ENCODE measurements at regions of chr2 and their contacts with region 1.

Region 1: DNA sequence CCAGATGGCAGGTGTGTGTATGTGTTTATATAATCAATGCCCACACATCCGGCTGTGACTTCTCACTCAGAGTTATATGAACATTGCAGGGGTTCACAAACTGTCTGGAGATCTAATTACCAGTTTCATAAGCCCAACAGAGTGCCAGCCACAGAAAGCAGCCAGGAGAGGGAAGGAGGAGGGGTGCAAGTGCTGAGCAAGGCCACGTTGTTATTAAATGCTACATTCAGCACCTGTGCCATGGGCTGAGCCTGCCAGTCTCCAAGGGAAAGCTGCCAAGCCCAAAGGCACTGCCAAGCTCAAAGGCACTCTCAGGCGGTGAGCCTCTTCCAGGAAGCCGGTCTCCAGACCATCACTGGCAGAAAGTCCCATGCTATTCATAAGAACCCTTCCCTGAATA is 17.4 kb downstream of the XDH start:
- DNase-seq: peak; percentile 84 to 90
- ATAC-seq: peak; percentile 99
- H3K4me3 ChIP-seq: no peak overlapping the region
- H3K27ac ChIP-seq: peak overlapping the region; percentile 33 to 78 (median 66)
- H3K4me1 ChIP-seq: peaks cover 10 to 15% of the 10 kb centered on the region in 2 donors
- H3K27me3 ChIP-seq: no peaks in the 10 kb centered on the region
- CTCF ChIP-seq: no peak
- POLR2A ChIP-seq: no peak

Region 2: DNA sequence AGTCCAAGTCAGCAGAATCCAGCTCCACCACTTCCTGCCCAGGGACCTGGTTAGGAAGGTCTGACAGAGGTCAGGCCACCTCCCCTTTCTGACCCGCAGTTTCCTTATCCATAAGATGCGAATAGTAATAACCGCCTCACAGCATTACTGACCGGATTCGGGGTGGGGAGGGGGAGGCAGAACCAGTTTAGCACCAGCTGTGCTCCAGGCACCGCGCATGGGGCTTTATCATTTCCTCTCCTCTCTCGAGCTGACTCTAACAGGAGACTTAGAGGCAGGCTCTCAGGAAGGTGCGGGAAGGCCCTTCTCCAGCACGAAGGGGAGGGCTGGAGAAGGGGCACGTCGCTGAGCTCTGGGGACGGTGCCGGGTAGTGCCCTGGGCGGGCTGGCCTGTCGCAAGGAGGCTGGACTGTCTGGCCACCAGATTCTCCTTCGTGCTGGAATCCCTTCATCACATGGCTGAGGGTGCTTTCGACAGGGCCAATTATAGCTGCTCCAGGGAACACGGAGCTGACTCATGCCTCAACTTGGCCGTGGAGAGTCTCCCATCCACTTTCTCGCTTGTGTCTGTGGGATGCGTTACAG is 157.4 kb before region 1 on chr2:
- in situ Hi-C with region 1: no loop called
- intact Hi-C with region 1: loop called (anchors 5 kb)
- DNase-seq: peak; percentile 88 to 91
- ATAC-seq: peak; percentile 84 to 86
- H3K4me3 ChIP-seq: no peak overlapping the region
- H3K27ac ChIP-seq: peak overlapping the region; percentile 74 to 86 (median 80)
- H3K4me1 ChIP-seq: peaks cover 41 to 51% of the 10 kb centered on the region in 2 donors
- H3K27me3 ChIP-seq: no peaks in the 10 kb centered on the region
- CTCF ChIP-seq: no peak
- POLR2A ChIP-seq: peak; percentile 25 to 32

Measured in gastrocnemius medialis (tissue), 4 donors.